Activated CD4-positive, alpha-beta memory T cell treated with anti-CD3 and anti-CD28 coated beads, Interleukin-2, amount 10 ng/mL, durations not matched to agents 7 days and 5 days (primary cell): ENCODE measurements at regions of chr1 and their contacts with region 1.

Region 1: DNA sequence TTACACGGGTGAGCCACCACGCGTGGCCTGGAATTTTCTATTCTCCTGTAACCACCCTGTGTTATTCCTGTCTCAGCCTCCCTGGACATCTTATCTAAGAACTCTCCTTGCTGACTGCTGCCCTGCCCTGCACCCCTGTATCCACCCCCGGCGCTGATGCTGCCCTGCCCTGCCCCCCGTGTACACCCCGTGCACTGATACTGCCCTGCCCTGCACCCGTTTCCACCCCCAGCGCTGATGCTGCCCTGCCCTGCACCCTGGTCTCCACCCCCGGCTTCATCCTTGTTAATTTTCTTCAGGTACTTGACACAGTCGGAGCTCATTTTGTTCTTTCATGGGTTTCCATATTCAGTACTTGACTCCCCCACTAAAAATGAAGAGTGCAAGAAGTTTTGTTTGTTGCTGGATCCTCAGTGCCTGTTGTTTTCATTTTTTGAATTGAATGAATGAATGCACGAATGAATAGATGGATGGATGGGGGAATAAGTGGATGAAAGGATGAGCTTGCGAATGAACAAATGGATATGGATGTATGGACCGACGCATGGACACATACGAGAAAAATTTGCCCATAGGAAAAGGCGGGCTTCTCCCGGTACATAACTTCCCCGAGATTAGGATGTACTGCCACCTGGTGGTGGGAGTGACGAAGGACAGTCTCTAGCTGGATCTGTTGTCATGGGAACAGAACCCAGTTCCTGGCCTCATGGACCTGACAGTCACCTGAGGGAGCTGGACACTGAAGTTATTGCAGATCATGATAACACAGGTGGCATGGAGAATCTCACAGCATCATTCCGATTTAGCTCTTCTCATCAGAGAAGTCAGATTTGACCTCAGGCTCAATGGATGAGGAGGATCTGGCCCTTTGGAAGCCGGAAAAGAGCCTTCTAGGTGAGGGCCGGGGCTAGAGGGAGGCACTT is 14.9 kb downstream of the AADACL4 start:
- DNase-seq: peak; percentile 72
- H3K4me3 Mint-ChIP-seq: peak overlapping the region; percentile 25
- H3K27ac Mint-ChIP-seq: no peak overlapping the region
- H3K4me1 Mint-ChIP-seq: peaks cover 11% of the 10 kb centered on the region
- H3K27me3 Mint-ChIP-seq: peaks cover 13% of the 10 kb centered on the region

Region 2: DNA sequence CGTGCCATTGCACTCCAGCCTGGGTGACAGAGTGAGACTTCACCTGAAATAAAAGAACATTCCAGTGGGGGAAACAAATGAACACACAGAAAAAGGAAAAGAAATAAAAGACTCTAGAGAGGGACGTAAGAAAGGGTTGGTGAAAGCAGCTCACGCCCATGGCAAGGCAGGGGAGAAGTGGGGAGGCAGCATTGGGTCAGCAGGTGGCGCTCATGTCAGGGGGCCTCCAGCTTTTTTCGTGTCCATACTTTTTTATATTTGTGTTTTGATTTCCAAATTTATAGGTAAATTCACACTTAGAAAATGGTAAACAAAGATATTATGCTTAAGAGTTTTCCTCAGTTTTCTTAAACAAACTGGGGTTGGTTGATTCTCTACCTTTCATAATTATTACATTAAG is 383.4 kb before region 1 on chr1:
- CTCF ChIA-PET with region 1: interaction called, 33 read pairs
- POLR2A ChIA-PET with region 1: no interaction called
- DNase-seq: peak; percentile 43
- H3K4me3 Mint-ChIP-seq: no peak overlapping the region
- H3K27ac Mint-ChIP-seq: no peak overlapping the region
- H3K4me1 Mint-ChIP-seq: no peaks in the 10 kb centered on the region
- H3K27me3 Mint-ChIP-seq: no peaks in the 10 kb centered on the region

Region 3: GRCh38 chr1:12296623-12297022 is 362.2 kb before region 1 on chr1:
- CTCF ChIA-PET with region 1: interaction called, 10 read pairs
- POLR2A ChIA-PET with region 1: no interaction called
- DNase-seq: no peak
- H3K4me3 Mint-ChIP-seq: no peak overlapping the region
- H3K27ac Mint-ChIP-seq: peak overlapping the region; percentile 36
- H3K4me1 Mint-ChIP-seq: peaks cover 33% of the 10 kb centered on the region
- H3K27me3 Mint-ChIP-seq: no peaks in the 10 kb centered on the region

Region 4: DNA sequence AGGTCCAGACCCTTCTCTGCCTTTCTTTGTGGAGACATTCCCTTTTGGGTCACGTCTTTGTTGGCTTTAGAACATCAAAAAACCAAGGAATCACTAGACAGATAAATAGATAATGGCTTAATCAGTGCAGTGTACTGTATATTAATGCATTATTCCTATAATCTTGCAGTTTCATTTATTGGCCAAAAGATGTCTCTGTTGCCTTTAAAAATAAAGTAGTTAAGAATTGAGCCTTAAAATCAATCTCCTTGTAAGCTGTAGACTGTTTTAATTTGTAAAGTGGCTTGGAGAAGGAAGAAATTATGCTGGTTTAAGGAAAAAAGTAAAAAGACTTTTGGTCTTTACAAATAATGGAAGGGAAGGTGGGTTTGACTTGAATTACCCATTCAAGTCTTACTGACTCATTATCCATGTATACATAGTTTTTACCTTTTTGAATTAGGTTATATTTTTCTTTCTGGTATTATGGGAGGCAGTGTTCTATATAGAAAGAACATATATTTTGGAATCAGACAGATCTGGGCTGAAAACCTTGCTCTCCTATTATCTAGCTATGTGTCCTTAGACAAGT is 344.4 kb before region 1 on chr1:
- CTCF ChIA-PET with region 1: interaction called, 53 read pairs
- POLR2A ChIA-PET with region 1: no interaction called
- DNase-seq: no peak
- H3K4me3 Mint-ChIP-seq: no peak overlapping the region
- H3K27ac Mint-ChIP-seq: no peak overlapping the region
- H3K4me1 Mint-ChIP-seq: no peaks in the 10 kb centered on the region
- H3K27me3 Mint-ChIP-seq: no peaks in the 10 kb centered on the region

Region 5: DNA sequence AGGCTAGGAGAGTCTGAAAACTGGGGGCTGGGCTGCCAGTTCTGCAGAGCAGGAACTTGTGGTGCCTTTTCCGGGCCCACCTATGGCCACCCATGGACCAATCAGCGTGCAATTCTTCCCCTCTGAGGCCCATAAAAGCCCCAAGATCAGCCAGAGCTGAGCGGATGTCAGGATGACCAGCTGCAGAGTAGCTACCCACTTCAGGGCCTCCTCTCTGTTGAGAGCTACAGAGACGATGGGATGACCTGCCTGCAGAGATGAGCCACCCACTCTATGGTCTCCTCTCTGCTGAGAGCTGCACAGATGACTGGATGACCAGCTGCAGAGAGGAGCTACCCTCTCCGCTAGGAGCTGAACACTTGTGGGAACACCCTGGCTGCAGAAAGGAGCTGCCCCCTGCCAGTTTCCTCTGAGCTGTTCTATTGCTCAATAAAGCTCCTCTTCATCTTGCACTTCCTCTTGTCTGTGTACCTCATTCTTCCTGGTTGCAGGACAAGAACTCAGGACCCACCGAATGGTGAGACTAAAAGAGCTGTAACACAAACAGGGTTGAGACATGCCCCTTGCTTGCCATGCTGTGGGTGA is 27.8 kb before region 1 on chr1:
- CTCF ChIA-PET with region 1: interaction called, 13 read pairs
- POLR2A ChIA-PET with region 1: no interaction called
- DNase-seq: no peak
- H3K4me3 Mint-ChIP-seq: no peak overlapping the region
- H3K27ac Mint-ChIP-seq: no peak overlapping the region
- H3K4me1 Mint-ChIP-seq: peaks cover 6% of the 10 kb centered on the region
- H3K27me3 Mint-ChIP-seq: peaks cover 8% of the 10 kb centered on the region

Region 6: DNA sequence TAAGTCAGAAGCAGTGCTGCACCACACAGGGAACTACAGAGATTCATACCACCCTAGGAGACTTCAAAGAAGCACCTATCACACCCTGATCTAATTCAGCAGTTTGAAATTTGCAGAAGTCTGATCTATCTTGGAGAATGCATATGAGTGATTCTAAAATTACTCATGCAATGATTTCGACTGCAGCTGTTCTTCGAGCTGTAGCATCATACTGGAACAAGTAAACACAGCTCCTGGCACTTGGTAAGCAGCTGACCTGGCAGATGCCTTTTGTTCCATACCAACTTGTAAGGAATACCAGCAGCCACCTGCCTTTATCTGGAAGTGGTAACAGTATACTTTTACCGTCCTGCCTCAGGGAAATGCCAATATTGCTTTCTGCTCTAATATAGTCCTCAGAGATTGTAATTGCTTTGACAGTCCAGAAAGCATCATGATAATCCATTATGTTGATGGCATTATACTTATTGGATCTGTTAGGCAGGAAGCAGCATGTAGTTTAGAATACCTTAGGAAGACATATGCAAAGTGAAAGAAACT is 10.8 kb after region 1 on chr1:
- CTCF ChIA-PET with region 1: interaction called, 13 read pairs
- POLR2A ChIA-PET with region 1: no interaction called
- DNase-seq: no peak
- H3K4me3 Mint-ChIP-seq: no peak overlapping the region
- H3K27ac Mint-ChIP-seq: no peak overlapping the region
- H3K4me1 Mint-ChIP-seq: no peaks in the 10 kb centered on the region
- H3K27me3 Mint-ChIP-seq: peaks cover 23% of the 10 kb centered on the region